ENCODE measurements at regions of chr17 and their contacts with region 1.

Region 1: DNA sequence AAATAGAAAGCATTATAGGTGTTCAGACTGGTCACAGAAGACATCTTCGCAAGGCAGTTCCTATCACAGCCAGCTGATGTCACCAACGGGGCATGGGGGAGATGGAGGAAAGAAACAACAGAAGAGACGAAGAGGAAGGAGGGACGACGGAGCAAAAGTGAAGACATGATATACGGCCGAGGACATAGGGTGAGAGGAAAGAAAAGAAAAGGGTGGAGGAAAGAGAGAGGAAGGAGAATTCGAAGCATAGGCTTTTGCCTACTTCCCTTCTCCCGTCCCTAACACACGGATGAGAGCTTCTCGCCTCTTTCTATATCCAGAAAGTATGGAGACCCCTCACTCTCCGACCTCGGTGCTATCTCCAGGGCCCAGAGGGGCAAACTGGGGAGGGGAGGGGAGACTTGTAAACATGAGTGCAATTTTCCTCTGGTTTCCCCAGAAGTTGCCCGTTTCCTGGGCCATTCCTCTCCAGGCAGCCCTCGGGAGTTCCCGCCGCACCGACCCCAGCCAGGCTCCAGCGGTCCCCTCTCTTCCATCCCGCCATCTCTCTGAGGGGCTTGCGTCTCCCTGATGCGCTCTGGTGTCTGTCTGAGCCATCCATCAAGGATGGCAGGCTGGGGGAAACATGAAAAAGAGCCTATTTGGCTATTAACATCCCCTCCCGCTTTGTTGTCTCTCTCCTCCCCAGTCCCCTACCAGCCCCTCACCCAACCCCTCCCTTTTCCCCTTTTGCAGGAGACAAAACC is 26.0 kb downstream of the COPZ2 start:
- DNase-seq: peak in 1 of 4 donors; percentile 23
- ATAC-seq: peak; percentile 75
- H3K4me3 ChIP-seq: peak overlapping the region; percentile 9 to 24
- H3K27ac ChIP-seq: no peak overlapping the region
- H3K4me1 ChIP-seq: peaks cover 8 to 19% of the 10 kb centered on the region in 2 donors
- H3K27me3 ChIP-seq: peaks cover 10 to 84% of the 10 kb centered on the region in 2 donors
- CTCF ChIP-seq: peak in 1 of 2 donors; percentile 12

Region 2: DNA sequence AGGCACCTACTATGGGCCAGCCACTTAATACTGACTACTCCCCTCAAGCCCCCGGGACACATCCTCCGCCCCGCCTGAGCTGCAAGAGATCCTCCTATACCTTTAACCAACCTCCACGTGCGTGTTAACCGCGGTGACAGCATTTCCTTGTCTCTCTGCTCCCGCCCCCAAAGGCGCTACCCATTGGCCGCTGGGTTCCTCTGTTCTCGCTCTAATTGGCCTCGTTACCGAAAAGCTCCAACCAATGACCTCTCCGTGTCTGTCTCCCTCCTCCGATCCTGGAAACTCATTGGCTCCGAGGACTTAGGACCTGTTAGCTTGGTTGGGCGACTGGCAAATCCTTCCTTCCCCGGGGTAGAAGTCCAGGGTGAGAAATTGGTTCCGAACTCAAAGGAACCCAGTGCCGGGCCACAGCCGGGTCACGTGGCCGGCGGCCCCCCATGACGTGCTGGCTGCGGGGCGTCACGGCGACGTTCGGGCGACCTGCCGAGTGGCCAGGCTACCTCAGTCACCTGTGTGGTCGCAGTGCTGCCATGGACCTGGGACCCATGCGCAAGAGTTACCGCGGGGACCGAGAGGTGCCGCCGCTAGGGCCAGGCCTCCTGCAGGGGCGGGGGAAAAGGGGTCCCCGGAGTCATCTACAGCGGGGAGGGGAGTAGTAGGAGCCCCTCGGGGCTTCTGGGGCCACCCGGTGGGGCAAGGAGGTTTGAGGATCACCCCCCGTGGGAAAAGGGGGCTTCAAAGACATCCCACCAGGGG is 70.2 kb before region 1 on chr17 and contains the start of gene PNPO:
- intact Hi-C with region 1: loop called in 1 of 2 experiments (anchors 10 kb)
- DNase-seq: peak; percentile 81 to 95 (median 94)
- ATAC-seq: peak; percentile 99
- H3K4me3 ChIP-seq: peak within 1 kb of the TSS; percentile 87 to 93
- H3K27ac ChIP-seq: peak within 1 kb of the TSS; percentile 53 to 85
- H3K4me1 ChIP-seq: peaks cover 8 to 50% of the 10 kb centered on the region in 2 donors
- H3K27me3 ChIP-seq: no peaks in the 10 kb centered on the region
- CTCF ChIP-seq: no peak
- polyA plus RNA-seq, gene PNPO: 10.7 to 14.4 (median 11.9) TPM

Measured in left lung (tissue), 14 donors.